ENCODE measurements at regions of chr9 and their contacts with region 1.

Region 1: GRCh38 chr9:35732122-35732799 is at the starts of genes CREB3 and TLN1:
- DNase-seq: peak; percentile 84 to 97
- ATAC-seq: peak; percentile 84 to 94 (median 86)
- H3K4me3 ChIP-seq: peak within 1 kb of the TSS; percentile 88
- H3K4me3 Mint-ChIP-seq: no peak within 1 kb of the TSS
- H3K27ac ChIP-seq: peak within 1 kb of the TSS; percentile 95
- H3K27ac Mint-ChIP-seq: no peak within 1 kb of the TSS
- H3K4me1 ChIP-seq: peaks cover 50% of the 10 kb centered on the region
- H3K4me1 Mint-ChIP-seq: peaks cover 16 to 25% of the 10 kb centered on the region in 2 donors
- H3K27me3 ChIP-seq: no peaks in the 10 kb centered on the region
- H3K27me3 Mint-ChIP-seq: no peaks in the 10 kb centered on the region
- CTCF ChIP-seq: no peak
- total RNA-seq, gene CREB3: 15.7 to 19.7 (median 18.8) TPM
- total RNA-seq, gene TLN1: 509 to 552 (median 528) TPM

Region 2: GRCh38 chr9:35096035-35096849 is 636.0 kb before region 1 on chr9 and contains the start of gene PIGO:
- intact Hi-C with region 1: loop called (anchors 1 kb)
- DNase-seq: peak; percentile 85 to 94
- ATAC-seq: peak; percentile 93 to 97 (median 94)
- H3K4me3 ChIP-seq: peak within 1 kb of the TSS; percentile 83
- H3K4me3 Mint-ChIP-seq: peak within 1 kb of the TSS; percentile 86
- H3K27ac ChIP-seq: peak within 1 kb of the TSS; percentile 95
- H3K27ac Mint-ChIP-seq: peak within 1 kb of the TSS; percentile 91 to 93
- H3K4me1 ChIP-seq: peaks cover 15% of the 10 kb centered on the region
- H3K4me1 Mint-ChIP-seq: peaks cover 19 to 37% of the 10 kb centered on the region in 2 donors
- H3K27me3 ChIP-seq: no peaks in the 10 kb centered on the region
- H3K27me3 Mint-ChIP-seq: no peaks in the 10 kb centered on the region
- CTCF ChIP-seq: peak; percentile 87
- total RNA-seq, gene PIGO: 23.6 to 28.2 (median 27.7) TPM

Region 3: GRCh38 chr9:35508069-35508468 is 224.2 kb before region 1 on chr9:
- intact Hi-C with region 1: no loop called
- DNase-seq: no peak
- ATAC-seq: no peak
- H3K4me3 ChIP-seq: no peak overlapping the region
- H3K4me3 Mint-ChIP-seq: no peak overlapping the region
- H3K27ac ChIP-seq: no peak overlapping the region
- H3K27ac Mint-ChIP-seq: no peak overlapping the region
- H3K4me1 ChIP-seq: no peaks in the 10 kb centered on the region
- H3K4me1 Mint-ChIP-seq: peaks cover 5 to 6% of the 10 kb centered on the region in 2 donors
- H3K27me3 ChIP-seq: no peaks in the 10 kb centered on the region
- H3K27me3 Mint-ChIP-seq: peaks cover 0 to 8% of the 10 kb centered on the region in 2 donors
- CTCF ChIP-seq: no peak

Region 4: GRCh38 chr9:35616681-35617459 is 115.4 kb before region 1 on chr9:
- intact Hi-C with region 1: loop called (anchors 5 kb)
- DNase-seq: peak; percentile 85 to 86
- ATAC-seq: peak; percentile 73 to 82 (median 80)
- H3K4me3 ChIP-seq: peak overlapping the region; percentile 55
- H3K4me3 Mint-ChIP-seq: peak overlapping the region; percentile 96
- H3K27ac ChIP-seq: peak overlapping the region; percentile 97
- H3K27ac Mint-ChIP-seq: peak overlapping the region; percentile 98 to 99
- H3K4me1 ChIP-seq: peaks cover 52% of the 10 kb centered on the region
- H3K4me1 Mint-ChIP-seq: peaks cover 59 to 65% of the 10 kb centered on the region in 2 donors
- H3K27me3 ChIP-seq: no peaks in the 10 kb centered on the region
- H3K27me3 Mint-ChIP-seq: no peaks in the 10 kb centered on the region
- CTCF ChIP-seq: no peak

Region 5: DNA sequence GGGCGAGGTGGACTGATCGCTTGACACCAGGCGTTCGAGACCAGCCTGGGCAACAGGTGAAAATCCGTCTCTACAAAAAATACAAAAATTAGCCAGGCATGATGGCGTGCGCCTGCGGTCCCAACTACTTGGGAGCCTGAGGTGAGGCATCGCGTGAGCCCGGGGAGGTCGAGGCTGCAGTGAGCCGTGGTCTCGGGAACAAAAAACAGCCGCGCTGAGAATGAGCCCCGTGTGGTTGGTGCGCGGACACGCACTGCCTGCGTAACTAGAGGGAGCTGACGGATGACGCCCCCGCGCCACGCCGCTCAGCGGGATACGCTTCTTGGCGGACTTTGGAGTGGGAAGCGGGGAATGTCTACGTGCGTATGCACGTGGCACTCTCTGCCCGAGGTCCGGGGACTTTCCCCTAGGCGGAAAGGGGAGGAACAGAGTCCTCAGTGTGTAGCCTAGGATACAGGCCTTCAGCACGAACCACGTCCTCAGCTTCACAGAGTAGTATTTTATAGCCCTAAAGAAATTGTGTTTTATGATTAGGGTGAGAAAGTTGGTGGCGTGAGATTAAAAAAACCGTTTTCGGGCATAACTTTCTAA is 74.6 kb before region 1 on chr9 and contains the start of gene RMRP:
- intact Hi-C with region 1: loop called (anchors 2 kb)
- DNase-seq: peak; percentile 74 to 96
- ATAC-seq: peak; percentile 80 to 90 (median 83)
- H3K4me3 ChIP-seq: peak within 1 kb of the TSS; percentile 82
- H3K4me3 Mint-ChIP-seq: peak within 1 kb of the TSS; percentile 97
- H3K27ac ChIP-seq: peak within 1 kb of the TSS; percentile 99
- H3K27ac Mint-ChIP-seq: peak within 1 kb of the TSS; percentile 95 to 100
- H3K4me1 ChIP-seq: peaks cover 64% of the 10 kb centered on the region
- H3K4me1 Mint-ChIP-seq: peaks cover 55 to 67% of the 10 kb centered on the region in 2 donors
- H3K27me3 ChIP-seq: no peaks in the 10 kb centered on the region
- H3K27me3 Mint-ChIP-seq: peaks cover 3 to 8% of the 10 kb centered on the region in 2 donors
- CTCF ChIP-seq: no peak
- total RNA-seq, gene RMRP: 5,042 to 6,602 (median 5,874) TPM

Region 6: DNA sequence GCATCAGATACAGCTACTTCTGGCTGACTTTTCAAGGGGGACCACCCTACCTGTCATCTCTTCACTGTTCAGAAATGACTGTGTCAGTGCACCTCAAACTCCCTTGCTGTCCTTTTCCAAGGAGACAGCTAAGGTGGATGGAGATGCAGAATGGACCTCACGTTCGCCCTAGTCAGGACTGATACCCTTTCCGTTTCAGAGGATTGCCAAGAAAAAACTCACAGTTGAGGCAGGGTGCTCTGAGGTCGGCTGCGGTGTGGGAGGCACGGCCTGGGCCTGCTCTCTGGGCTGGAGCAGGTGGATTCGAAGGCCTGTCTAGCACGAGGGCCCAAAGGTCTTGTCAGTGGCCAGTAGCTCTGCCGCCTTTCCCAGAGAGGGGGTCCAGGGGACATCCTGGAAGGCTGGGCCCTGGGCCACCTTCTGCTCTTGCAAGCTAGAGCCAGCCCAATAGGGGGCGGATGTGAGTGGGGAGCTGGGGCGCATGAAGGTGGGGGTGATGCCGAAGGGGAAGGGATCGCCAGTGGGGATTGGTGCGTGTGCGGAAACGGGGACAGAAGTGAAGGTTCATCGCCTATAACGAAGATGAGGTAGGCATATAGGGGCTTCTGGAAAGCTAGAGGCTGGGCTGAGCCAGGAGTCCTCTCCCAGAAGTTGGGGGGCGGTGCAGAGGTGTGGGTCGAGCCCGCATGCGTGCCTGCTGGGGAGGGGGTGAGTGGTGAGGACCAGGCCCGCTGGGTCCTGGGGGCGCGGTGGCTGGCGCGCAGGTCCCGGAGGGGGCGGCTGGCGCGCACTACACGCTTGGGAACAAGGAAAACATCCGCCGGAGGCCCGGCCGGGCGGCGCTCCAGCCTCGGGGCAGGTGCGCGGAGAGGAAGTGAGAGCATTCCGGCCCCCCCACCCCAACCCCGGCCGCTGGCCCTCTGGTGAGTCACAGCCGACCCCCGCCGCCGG is 24.3 kb after region 1 on chr9:
- intact Hi-C with region 1: loop called (anchors 2 kb)
- DNase-seq: peak; percentile 59 to 88
- ATAC-seq: peak; percentile 89 to 92 (median 90)
- H3K4me3 ChIP-seq: peak overlapping the region; percentile 91
- H3K4me3 Mint-ChIP-seq: peak overlapping the region; percentile 97
- H3K27ac ChIP-seq: peak overlapping the region; percentile 85
- H3K27ac Mint-ChIP-seq: peak overlapping the region; percentile 75 to 97
- H3K4me1 ChIP-seq: peaks cover 16% of the 10 kb centered on the region
- H3K4me1 Mint-ChIP-seq: peaks cover 29 to 34% of the 10 kb centered on the region in 2 donors
- H3K27me3 ChIP-seq: no peaks in the 10 kb centered on the region
- H3K27me3 Mint-ChIP-seq: no peaks in the 10 kb centered on the region
- CTCF ChIP-seq: peak; percentile 71

Region 7: DNA sequence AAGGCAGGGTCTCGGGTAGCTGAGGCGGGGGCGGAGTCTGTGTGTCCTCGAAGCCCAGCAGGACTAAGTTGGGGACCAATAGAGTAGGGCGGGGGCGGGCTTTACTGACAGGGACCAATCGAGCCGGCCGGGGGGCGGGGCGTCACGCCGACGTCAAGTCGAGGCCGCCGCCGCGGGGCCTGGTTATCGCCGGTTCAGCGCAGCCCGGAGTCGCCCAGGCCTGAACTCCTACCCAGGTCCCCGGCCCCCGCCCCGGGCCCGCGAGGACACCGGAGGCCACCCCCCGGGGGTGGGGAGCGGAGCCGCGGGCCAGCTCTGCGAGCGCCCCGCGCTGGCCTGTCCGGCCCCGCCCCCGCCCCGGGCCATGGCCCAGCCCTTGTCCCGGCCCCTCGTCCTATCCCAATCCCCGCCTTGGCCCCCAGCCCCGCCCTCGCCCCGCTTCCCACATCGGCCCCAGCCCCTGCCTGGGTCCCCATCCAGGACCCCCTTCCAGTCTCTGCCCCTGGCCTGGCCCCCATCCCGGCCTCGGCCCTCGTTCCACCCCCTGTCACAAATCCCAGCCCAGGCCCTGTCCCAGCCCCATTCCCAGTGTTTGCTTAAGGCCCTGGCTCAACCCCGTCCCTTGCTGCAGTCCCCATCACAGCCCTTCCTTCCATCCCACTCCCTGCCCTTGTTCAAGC is 97.0 kb after region 1 on chr9 and contains the start of gene TMEM8B:
- intact Hi-C with region 1: loop called (anchors 5 kb)
- DNase-seq: peak; percentile 88 to 96
- ATAC-seq: peak; percentile 94 to 95 (median 94)
- H3K4me3 ChIP-seq: peak within 1 kb of the TSS; percentile 82
- H3K4me3 Mint-ChIP-seq: peak within 1 kb of the TSS; percentile 99
- H3K27ac ChIP-seq: peak within 1 kb of the TSS; percentile 70
- H3K27ac Mint-ChIP-seq: peak within 1 kb of the TSS; percentile 92 to 93
- H3K4me1 ChIP-seq: peaks cover 23% of the 10 kb centered on the region
- H3K4me1 Mint-ChIP-seq: peaks cover 27 to 38% of the 10 kb centered on the region in 2 donors
- H3K27me3 ChIP-seq: no peaks in the 10 kb centered on the region
- H3K27me3 Mint-ChIP-seq: no peaks in the 10 kb centered on the region
- CTCF ChIP-seq: no peak
- total RNA-seq, gene TMEM8B: 5.2 to 7.8 (median 5.4) TPM